A673 (cell line): ENCODE measurements at regions of chr10 and their contacts with region 1.

Region 1: GRCh38 chr10:114470956-114471905 is 66.9 kb upstream of the AFAP1L2 start:
- DNase-seq: peak; percentile 76
- H3K4me3 ChIP-seq: no peak overlapping the region
- H3K27ac ChIP-seq: no peak overlapping the region
- H3K4me1 ChIP-seq: no peaks in the 10 kb centered on the region
- H3K27me3 ChIP-seq: no peaks in the 10 kb centered on the region
- CTCF ChIP-seq: peak; percentile 89

Region 2: DNA sequence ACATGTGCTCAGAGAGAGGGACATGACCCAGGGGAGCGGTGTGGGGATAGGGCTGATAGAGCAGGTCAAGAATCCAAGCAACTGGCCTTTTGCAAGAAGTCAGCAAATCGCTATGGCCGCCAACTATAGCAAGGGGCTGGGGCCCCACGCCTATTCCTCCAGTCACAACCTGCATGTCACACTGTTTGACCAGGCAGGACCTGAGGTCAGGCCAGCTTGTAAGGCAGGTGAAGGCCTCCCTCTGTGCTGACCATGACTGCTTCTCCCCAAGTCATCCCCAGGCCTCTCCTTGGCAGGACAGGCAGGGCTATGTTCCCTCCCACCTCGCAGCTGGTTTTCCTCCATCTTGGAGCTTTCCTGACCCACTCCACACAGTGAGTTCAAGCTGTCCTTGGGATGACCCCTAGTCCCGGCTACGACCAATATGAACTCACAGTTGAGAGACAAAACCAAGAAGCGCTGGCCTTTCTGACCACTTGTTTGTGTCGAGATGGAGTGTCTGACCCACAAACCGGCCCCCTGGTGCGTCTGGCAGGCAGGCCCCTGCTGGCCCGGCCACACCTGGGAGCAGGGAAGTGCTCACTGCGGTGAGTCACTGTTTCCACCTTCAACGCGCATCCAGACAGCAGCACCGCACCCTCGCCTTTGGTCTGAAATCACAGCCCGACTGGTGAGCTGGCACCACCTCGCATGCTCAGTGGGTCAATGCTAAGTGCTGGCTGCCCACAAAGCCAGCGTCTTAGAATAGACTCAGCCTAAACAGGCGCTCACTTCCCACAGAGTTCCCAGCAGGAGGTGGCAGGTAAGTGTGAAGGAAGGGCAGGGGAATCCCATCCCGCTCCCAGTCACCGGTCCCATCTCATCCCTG is 150.7 kb before region 1 on chr10:
- CTCF ChIA-PET with region 1: no interaction called
- POLR2A ChIA-PET with region 1: no interaction called
- intact Hi-C with region 1: no loop called
- DNase-seq: no peak
- H3K4me3 ChIP-seq: no peak overlapping the region
- H3K27ac ChIP-seq: no peak overlapping the region
- H3K4me1 ChIP-seq: no peaks in the 10 kb centered on the region
- H3K27me3 ChIP-seq: no peaks in the 10 kb centered on the region
- CTCF ChIP-seq: no peak

Region 3: DNA sequence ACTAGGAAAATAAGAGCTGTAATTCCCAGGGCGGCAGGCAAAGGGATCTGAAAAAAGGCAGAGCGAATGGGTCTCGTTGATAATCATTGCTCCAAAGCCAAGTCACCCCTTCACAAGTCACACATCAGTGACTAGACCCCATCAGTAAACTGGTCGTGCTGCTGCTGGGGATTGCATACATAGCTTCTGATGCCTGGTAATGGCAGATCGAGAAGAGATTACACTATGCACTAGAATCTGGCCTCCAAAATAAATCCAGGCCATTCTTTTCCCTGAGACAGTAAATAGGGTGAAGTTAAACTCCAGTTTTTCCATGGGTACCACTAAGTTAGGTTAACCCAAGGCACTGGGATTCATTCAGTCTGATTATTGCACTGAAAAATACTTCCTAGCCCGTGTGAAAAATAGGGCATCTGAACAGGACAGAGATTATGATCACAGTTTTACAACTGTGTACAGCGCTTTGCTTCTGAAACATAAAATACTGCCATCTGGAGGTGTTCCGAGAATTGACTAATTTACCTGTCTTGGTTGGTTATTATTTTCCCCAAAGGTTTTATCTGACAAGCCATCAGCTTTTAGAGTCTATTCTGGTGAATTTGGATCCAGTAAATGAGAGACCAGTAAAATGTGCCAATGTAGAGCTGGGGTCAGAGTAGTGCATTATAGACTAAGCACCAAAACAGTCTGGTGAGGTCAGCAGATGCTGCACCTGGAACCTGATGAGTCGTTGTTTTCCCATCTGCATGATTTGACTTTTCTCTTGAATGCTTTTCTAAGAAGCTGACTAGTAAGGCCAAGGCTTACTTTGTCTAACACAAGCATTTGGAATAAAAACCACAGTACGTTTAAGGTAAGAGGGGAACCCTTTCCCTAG is 15.9 kb after region 1 on chr10:
- CTCF ChIA-PET with region 1: no interaction called
- POLR2A ChIA-PET with region 1: no interaction called
- intact Hi-C with region 1: no loop called
- DNase-seq: no peak
- H3K4me3 ChIP-seq: no peak overlapping the region
- H3K27ac ChIP-seq: no peak overlapping the region
- H3K4me1 ChIP-seq: peaks cover 6% of the 10 kb centered on the region
- H3K27me3 ChIP-seq: no peaks in the 10 kb centered on the region
- CTCF ChIP-seq: peak; percentile 36; the same call in 1 of the 2 replicates

Region 4: DNA sequence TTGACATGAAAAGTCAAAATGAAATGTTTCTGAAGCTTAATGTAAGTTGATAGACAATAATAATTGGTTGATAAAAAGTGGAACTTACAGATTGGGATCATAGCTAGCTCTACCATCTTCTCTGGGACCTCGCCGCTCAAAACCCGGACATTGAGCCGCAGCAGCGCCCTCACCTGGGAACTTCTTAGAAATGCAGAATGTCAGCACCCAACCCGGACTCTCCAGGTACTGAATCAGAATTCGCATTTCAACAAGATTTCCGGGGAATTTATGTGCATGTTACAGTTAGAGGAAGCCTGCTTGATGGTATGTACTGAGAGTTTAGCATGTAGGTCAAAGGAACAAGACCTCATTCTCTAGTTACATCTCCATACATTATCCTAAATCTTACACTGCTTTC is 223.5 kb after region 1 on chr10:
- CTCF ChIA-PET with region 1: interaction called, 10 read pairs
- POLR2A ChIA-PET with region 1: no interaction called
- intact Hi-C with region 1: no loop called
- DNase-seq: peak; percentile 68
- H3K4me3 ChIP-seq: no peak overlapping the region
- H3K27ac ChIP-seq: no peak overlapping the region
- H3K4me1 ChIP-seq: peaks cover 16% of the 10 kb centered on the region
- H3K27me3 ChIP-seq: no peaks in the 10 kb centered on the region
- CTCF ChIP-seq: peak; percentile 84

Region 5: DNA sequence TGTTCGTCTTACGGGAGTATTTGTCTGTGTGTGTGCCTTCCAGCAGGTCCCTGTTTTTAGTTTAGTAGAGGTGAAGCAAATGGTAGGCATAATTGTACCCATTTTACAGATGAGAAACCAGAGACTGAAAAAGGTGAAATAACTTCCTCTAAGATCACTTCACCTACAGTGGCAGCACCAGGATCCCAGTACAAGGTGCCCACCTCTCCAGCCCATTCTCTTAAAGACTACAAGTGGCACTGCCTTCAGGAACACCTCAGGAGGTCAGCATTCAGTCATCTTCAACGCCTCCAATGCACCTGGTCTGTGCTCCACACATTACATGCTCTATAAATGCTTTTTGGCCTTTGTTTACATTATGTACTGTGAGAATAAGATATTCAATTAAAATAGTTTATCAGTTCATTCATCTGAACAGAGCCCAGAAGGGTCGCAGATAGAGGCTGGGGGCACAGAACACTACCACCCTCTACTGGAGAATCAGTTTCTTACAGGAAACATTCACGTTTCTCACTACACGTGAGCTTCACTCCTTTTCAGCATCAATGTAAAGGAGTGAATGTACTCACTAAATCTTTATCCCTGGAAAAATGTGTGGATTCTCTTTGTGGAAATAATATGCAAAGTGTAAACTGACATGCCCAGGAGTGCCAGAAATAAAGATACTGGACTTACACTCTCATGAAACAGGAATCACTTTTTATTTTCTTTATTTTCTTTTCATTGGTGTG is 232.3 kb after region 1 on chr10:
- CTCF ChIA-PET with region 1: interaction called, 6 read pairs
- POLR2A ChIA-PET with region 1: no interaction called
- intact Hi-C with region 1: loop called (anchors 2 kb)
- DNase-seq: peak; percentile 60
- H3K4me3 ChIP-seq: no peak overlapping the region
- H3K27ac ChIP-seq: no peak overlapping the region
- H3K4me1 ChIP-seq: peaks cover 4% of the 10 kb centered on the region
- H3K27me3 ChIP-seq: no peaks in the 10 kb centered on the region
- CTCF ChIP-seq: peak; percentile 73

Region 6: GRCh38 chr10:115129752-115130151 is 658.5 kb after region 1 on chr10:
- CTCF ChIA-PET with region 1: no interaction called
- POLR2A ChIA-PET with region 1: no interaction called
- intact Hi-C with region 1: loop called (anchors 10 kb)
- DNase-seq: peak; percentile 43
- H3K4me3 ChIP-seq: no peak overlapping the region
- H3K27ac ChIP-seq: no peak overlapping the region
- H3K4me1 ChIP-seq: no peaks in the 10 kb centered on the region
- H3K27me3 ChIP-seq: no peaks in the 10 kb centered on the region
- CTCF ChIP-seq: peak; percentile 60; the same call in 1 of the 2 replicates